Aorta (tissue), 5 donors: ENCODE measurements at regions of chr6 and their contacts with region 1.

Region 1: GRCh38 chr6:134174672-134175198 is 122.3 kb upstream of the SLC2A12 start:
- DNase-seq: peak; percentile 96 to 98
- ATAC-seq: peak; percentile 93
- H3K4me3 ChIP-seq: peak overlapping the region; percentile 62 to 76
- H3K27ac ChIP-seq: peak overlapping the region; percentile 97 to 98
- H3K4me1 ChIP-seq: no peaks in the 10 kb centered on the region
- H3K27me3 ChIP-seq: no peaks in the 10 kb centered on the region

Region 2: DNA sequence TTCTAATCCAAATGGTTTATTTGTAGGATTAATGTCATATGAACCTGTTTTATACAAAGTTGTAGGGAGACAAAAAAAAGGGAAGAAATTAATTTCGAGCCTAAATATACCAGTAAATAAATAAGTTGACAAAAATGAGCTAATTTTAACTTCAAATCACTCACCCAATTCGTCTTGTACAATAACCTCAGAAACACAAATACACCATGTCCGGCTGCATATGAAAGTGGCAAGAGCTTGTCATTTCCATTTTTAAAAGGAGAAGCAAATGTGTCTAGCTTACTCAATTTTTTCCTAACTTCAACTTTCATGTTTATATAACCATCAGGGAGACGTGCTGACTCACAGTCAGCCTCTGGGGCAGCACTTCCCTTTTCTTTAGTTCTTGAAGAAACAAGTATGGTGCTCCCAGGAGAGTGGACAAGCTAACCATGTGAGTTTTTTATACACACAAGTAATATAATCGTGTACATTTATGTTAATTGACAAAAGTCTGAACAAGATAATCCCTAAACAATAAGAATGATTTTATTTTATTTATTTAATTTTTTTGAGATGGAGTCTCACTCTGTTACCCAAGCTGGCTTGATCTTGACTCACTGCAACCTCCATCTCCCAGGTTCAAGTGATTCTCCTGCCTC is 198.7 kb after region 1 on chr6:
- intact Hi-C with region 1: loop called (anchors 5 to 10 kb)
- DNase-seq: peak in 1 of 2 donors; percentile 85
- ATAC-seq: peak; percentile 86
- H3K4me3 ChIP-seq: no peak overlapping the region
- H3K27ac ChIP-seq: no peak overlapping the region
- H3K4me1 ChIP-seq: peaks cover 0 to 4% of the 10 kb centered on the region in 2 donors
- H3K27me3 ChIP-seq: no peaks in the 10 kb centered on the region

Region 3: DNA sequence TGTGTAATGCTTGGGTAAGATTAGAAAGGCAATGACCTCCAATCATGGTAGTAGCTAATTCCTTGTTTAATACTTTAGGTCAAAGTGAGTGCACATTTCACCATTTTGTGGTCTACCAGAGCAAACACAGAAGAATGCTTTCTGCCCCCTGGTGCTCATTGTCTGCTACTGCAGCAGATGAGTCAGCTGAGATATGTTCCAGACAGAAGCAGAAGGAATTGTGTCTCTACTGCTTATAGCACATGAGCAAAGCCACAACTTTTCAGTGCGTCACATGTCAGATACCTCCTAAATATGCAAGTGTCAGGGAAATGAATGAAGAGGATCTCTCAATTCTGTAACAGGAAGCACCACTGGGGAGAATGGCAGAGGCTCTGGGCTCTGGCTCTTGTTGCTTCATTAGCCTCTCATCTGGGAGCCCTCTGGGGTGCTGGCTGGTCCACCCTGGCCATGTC is 466.3 kb after region 1 on chr6:
- intact Hi-C with region 1: loop called (anchors 1 to 2 kb)
- DNase-seq: peak; percentile 84 to 88
- ATAC-seq: peak; percentile 94
- H3K4me3 ChIP-seq: no peak overlapping the region
- H3K27ac ChIP-seq: no peak overlapping the region
- H3K4me1 ChIP-seq: peaks cover 0 to 2% of the 10 kb centered on the region in 2 donors
- H3K27me3 ChIP-seq: no peaks in the 10 kb centered on the region

Region 4: DNA sequence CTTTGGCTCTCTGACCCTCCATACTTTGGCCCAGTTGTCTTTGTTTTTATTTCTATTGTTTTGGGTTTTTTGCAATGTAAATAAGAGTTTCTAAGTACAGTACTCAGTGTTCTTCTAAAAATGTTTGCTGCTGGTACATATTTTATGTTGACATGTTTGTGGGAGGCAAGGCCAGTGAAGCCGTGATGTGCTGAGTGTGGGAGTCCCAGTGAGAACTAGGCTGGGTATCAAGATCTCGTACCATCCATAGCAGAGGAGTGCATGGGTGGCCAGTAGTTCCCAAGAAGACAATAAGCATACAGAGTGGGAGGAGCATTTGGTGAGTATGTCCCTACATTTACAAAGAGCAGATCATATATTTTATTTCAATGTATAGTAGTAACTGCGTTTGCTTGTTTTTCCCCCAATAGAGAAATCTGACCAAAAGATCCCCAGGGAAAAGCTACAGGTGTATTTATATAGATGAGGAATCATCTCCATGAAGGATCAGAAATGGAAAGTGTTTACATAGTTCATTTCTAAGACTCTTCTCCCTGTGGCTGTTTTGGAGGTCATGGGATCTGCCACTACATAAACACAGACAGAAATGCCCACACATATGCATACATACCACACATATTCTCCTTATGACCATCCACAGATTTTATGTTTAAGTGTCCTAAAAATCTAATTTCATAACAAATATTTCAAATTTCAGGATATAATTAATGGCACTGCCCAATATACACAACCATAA is 489.2 kb after region 1 on chr6:
- intact Hi-C with region 1: no loop called
- DNase-seq: no peak
- ATAC-seq: no peak
- H3K4me3 ChIP-seq: no peak overlapping the region
- H3K27ac ChIP-seq: no peak overlapping the region
- H3K4me1 ChIP-seq: no peaks in the 10 kb centered on the region
- H3K27me3 ChIP-seq: no peaks in the 10 kb centered on the region

Region 5: DNA sequence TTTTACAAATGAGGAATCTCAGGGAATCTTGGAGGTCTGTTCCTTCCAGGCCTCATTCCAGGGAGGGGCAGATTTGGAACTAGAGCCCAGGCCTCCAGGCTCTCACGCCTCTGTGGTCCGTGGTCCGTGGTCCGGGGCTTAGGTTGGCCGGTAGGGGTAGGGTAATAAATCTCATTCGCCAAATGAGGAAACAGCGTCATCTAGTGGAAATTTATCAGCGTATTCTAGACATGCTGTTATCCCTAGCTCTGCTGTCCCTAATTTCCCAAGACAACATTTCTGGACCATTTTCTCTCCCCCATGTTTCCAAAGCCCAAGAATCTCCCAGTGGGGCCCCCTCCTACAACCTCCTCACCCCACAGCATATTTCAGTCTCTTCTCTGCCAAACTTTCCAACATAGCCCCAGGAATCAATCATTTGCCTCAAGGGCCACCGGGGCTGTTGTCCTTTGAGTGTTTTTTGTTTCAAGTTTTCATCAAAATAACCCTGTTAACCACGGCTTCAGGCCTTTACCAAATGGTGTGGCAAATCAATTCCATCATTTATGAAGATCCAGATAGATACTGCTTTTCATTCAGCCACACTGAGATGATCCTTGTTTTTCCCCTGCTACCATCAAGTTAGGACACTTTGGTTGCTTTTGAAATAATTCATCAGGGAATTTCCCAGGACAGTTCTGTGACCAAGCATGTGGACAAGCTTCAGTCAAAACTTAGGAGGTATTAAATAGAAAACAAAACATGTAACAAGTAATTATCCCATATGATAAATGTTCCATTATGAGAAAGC is 648.4 kb after region 1 on chr6:
- intact Hi-C with region 1: loop called (anchors 2 kb)
- DNase-seq: no peak
- ATAC-seq: peak; percentile 80
- H3K4me3 ChIP-seq: no peak overlapping the region
- H3K27ac ChIP-seq: no peak overlapping the region
- H3K4me1 ChIP-seq: peaks cover 3 to 5% of the 10 kb centered on the region in 2 donors
- H3K27me3 ChIP-seq: no peaks in the 10 kb centered on the region

Region 6: DNA sequence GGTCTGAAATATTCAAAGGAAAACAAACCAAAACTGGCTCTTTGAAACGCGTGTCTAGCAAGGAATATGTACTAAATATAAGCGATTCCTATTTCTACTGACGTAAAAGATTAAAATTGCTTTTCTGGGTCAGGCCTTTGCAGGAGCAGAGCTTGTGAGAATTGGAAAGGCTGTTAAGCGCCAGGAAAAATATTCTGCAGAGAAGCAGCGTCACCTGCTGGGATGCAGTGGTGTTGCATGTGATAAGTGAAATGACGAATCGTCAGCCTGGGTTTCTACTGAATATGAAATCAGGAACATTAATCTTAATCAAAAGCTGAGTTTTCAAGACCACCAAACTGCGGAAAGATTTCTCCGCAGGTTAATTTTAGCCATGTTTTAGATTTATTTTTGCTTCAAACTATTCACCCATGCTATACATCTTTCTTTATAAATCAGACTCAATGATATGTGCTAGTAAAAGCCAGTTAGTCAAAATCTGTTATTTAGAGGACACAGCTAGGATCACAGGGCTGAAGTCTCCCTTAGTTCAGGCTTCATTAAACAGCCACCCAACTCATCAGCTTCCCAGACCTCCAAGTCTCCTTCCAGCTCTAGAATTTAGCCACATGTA is 707.8 kb after region 1 on chr6:
- intact Hi-C with region 1: loop called (anchors 1 to 5 kb)
- DNase-seq: peak; percentile 77 to 84
- ATAC-seq: peak; percentile 88
- H3K4me3 ChIP-seq: no peak overlapping the region
- H3K27ac ChIP-seq: no peak overlapping the region
- H3K4me1 ChIP-seq: no peaks in the 10 kb centered on the region
- H3K27me3 ChIP-seq: no peaks in the 10 kb centered on the region

Region 7: DNA sequence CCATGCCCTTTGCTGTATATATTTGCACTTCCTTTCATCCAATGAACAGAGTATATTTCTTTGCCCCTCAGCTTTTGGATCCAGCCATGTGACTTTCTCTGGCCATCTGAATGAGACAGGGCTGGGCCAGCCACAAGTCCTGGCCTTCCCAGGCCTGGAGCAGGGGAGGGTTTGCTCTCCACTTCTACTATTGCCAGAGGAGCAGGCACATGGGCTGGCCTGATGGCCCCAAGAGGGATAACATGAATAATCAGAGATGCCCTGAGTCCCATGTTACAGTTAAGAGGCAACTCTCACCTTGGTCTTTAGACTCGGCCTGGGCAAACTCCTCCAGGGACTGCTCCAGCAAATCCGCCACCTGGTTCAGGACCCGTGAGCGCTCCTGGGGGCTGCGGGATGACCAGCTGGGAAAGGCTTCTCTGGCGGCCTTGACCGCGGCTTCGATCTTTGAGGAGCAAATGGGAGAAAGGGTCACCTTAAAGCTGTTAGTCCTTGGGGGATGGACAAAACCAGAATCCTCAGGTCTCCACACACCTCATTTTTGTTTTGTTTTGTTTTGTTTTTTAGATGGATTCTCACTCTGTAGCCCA is 768.9 kb after region 1 on chr6:
- intact Hi-C with region 1: loop called in 1 of 2 experiments (anchors 5 kb)
- DNase-seq: no peak
- ATAC-seq: no peak
- H3K4me3 ChIP-seq: no peak overlapping the region
- H3K27ac ChIP-seq: no peak overlapping the region
- H3K4me1 ChIP-seq: no peaks in the 10 kb centered on the region
- H3K27me3 ChIP-seq: no peaks in the 10 kb centered on the region